OCI-LY7 (cell line): ENCODE measurements at regions of chr2 and their contacts with region 1.

Region 1: DNA sequence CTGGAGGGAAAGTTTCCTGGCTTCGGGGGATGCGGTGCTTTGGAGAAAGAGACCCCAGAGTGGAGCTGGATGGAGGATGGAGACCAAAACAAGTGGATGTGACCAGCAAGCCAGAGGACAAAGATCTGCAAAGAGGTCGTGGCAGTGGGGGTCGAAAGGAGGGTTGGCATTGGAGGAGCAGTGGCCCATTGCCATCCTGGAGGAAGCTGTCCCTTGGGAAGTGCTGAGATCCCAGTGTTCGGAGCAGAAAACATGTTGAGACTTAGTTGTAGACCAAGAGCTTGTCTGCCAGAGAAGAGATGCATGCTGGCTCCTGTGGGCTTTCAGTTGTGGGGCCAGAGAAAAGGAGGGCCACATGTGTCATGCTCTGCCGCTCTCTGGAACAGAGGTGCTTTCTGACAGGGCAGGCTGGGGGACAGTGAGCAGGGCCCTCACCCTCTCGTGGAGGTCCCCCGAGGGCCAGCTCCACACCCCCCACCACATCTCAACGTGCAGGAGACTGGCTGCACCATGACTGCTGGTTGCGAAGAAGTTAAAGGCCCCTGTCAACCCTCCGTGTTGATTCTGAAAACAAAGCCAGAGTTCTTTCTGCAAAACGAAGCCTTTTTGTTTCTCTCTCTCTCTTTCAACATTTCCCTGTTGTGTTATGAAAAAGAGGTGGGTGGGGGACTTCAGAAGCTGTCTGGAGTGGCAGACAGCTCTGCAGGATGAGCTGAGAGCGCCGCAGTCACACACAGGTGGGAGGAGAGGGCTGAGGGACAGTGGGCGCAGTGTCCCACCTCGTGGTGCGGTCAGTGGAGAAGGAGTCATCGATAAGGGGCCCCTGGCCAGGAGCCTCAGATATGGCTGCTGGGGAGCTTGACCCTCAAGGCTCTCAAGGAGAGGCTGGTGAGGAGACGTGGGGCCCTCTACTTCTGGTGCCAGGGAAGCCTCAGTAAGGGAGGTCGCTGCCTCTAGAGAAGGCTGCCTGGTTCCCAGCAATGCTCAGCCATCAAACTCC is 77.6 kb upstream of the BCL2L11 start:
- DNase-seq: no peak
- H3K4me3 ChIP-seq: no peak overlapping the region
- H3K27ac ChIP-seq: no peak overlapping the region
- H3K4me1 ChIP-seq: peaks cover 60% of the 10 kb centered on the region
- CTCF ChIP-seq: no peak

Region 2: DNA sequence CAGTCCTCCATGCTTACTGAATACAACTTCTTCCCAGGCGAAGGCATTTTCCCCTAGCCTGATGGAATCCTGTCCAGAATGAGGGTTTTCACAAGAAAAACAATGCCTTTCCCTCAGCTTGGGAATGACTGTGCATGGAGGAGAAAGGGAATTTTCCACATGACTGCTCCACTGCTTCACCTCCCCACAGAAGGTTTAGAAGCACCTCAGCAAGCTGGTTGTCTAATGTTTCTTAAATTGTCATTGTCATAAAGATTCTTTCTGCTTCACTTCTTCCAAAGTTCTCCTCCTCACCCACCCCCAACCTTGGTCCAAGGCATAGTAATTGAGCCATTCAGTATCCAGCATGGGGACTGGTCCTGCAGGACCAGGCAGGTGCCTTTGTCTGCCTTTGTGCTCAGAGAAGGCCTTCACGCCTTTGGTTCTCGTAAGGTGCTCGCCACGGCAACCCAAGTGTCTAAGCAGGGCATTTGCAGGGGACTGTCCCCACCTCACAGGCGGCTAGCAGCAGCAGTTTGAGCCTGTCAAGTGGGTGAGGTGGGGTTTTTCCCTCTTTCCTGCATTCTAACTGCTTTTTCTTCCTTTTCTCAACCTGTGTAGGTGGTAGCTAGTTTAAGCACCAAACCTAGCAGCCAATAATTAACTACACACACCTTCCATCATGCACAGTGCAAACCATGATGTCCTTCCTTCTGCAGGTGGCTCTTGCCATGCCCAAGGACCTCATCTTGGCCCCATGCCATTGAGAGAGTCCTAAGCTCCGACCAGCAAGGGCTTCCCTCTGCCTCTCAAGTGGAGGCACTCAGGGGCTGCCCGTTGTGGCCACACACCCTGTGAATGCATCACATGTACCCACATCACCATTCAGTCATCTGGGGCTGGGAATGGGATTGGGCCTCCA is 12.0 kb after region 1 on chr2:
- CTCF ChIA-PET with region 1: interaction called, 4 read pairs
- POLR2A ChIA-PET with region 1: interaction called, 13 read pairs
- intact Hi-C with region 1: no loop called
- DNase-seq: peak; percentile 40
- H3K4me3 ChIP-seq: peak overlapping the region; percentile 7
- H3K27ac ChIP-seq: peak overlapping the region; percentile 87
- H3K4me1 ChIP-seq: peaks cover 91% of the 10 kb centered on the region
- CTCF ChIP-seq: no peak